Brain microvascular endothelial cell (primary cell): ENCODE measurements at regions of chr17 and their contacts with region 1.

Region 1: DNA sequence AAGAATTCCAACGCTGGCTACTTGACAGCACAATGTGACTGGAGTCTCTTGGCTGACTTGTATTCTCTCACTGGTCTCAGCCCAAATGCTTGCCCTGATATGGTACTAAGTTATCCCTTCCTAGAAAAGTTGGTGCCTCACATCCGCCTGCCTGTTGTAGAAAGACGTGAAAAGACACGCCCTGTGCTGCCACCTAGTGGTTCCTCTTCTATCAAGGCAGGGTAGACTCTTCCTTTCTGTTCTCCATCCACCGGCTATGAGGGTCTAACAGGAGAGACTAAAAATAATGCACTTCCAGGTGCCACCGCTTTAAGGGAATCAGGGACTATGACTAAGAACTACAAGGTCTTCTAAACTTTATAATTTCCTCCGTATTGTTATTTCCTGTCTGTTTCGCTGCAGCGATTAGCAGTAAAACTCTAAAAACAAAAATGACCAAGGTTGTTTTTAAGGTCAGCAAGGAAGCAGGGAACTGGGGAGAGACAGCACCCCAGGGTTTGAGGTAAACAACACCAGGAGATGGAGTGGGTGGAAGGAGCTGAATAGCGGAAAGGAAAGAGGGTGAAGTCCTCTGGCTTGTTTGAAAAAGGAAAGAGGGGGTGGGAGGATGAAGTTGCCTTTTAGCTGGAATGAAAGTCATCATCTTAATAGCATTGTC is 109.5 kb downstream of the YPEL2 start:
- DNase-seq: peak; percentile 91
- H3K4me3 ChIP-seq: no peak overlapping the region
- H3K27ac ChIP-seq: no peak overlapping the region
- H3K27me3 ChIP-seq: no peaks in the 10 kb centered on the region
- CTCF ChIP-seq: peak; percentile 89

Region 2: DNA sequence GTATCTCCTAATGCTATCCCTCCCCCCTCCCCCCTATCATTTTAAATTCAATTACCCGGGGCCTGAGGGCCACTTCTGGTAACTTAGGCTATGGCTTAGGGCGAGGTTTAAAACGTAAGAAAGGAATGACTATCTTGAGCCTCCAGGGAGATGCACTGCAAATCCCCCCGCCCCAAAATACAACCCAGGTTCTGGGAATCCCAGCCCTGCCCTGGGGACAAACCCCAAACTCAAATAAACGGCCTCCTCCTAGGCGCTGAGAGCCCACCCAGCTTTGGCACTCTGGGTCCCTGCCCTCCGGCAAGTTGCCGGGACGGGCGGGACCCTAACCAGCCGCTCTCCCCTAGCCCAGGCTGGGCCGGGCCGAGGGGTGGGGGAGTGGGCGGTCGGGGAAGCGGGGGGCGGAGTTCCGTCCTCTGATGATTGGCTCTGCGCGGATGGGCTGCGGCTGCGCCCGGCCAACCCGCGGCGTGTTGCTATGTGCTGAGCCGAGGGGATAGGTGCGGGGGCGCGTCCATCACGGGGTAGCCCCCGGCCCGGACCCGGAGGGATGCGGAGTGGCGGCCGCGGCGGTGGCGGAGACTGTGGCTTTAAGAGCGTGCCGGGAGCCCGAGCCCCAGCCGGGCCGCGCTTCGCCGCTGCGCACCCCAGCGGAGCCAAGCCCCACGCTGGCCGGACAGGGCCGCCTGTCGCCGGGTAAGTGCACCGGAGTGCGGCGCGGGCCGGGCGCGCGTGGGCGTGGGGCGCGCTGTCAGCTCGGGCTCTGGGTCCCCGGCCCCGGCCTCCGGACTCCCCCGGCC is 109.6 kb before region 1 on chr17 and contains the start of gene YPEL2:
- in situ Hi-C with region 1: loop called (anchors 25 kb)
- DNase-seq: peak; percentile 92
- H3K4me3 ChIP-seq: peak within 1 kb of the TSS; percentile 74
- H3K27ac ChIP-seq: peak within 1 kb of the TSS; percentile 54
- H3K27me3 ChIP-seq: no peaks in the 10 kb centered on the region
- CTCF ChIP-seq: no peak

Region 3: GRCh38 chr17:59357929-59358328 is 83.0 kb before region 1 on chr17:
- in situ Hi-C with region 1: no loop called
- DNase-seq: peak; percentile 86
- H3K4me3 ChIP-seq: no peak overlapping the region
- H3K27ac ChIP-seq: peak overlapping the region; percentile 59
- H3K27me3 ChIP-seq: no peaks in the 10 kb centered on the region
- CTCF ChIP-seq: no peak